ENCODE measurements at regions of chr5 and their contacts with region 1.

Region 1: DNA sequence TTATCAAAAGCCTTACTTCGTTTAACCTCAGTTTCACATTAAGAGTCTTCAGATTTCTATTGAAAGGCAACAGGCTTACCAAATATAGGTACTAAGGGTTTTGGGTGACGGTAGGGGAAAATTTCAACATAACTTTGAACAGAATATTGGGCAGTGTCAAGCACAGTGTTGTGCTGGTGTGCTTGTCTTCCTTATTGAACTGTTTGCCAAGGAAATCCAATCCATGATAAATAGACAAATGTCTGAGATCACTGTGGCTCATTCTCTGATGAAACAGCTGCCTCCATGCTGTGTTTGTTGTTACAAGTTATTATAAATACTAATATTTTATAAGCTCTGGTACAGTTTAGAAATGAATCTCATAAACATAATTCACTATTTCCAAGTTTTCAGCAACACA is 730.1 kb downstream of the NR2F1-AS1 start:
- DNase-seq: no peak
- H3K4me3 ChIP-seq: no peak overlapping the region
- H3K27me3 ChIP-seq: no peaks in the 10 kb centered on the region
- CTCF ChIP-seq: no peak

Region 2: GRCh38 chr5:92868442-92868841 is 17.6 kb after region 1 on chr5:
- CTCF ChIA-PET with region 1: interaction called, 10 read pairs
- POLR2A ChIA-PET with region 1: no interaction called
- DNase-seq: no peak
- H3K4me3 ChIP-seq: no peak overlapping the region
- H3K27me3 ChIP-seq: no peaks in the 10 kb centered on the region
- CTCF ChIP-seq: no peak

Measured in BJ (cell line).